Activated CD4-positive, alpha-beta T cell treated with anti-CD3 and anti-CD28 coated beads for 36 hours (primary cell): ENCODE measurements at regions of chr19 and their contacts with region 1.

Region 1: GRCh38 chr19:19192078-19192882 is at the starts of genes BORCS8 and RFXANK:
- DNase-seq: peak; percentile 99
- ATAC-seq: peak; percentile 92
- H3K4me3 Mint-ChIP-seq: peak within 1 kb of the TSS; percentile 91
- H3K27ac Mint-ChIP-seq: peak within 1 kb of the TSS; percentile 94
- H3K4me1 Mint-ChIP-seq: peaks cover 41% of the 10 kb centered on the region
- H3K27me3 Mint-ChIP-seq: no peaks in the 10 kb centered on the region
- total RNA-seq, gene BORCS8: 19.5 to 25.3 TPM
- total RNA-seq, gene RFXANK: 56.2 to 68.5 TPM

Region 2: DNA sequence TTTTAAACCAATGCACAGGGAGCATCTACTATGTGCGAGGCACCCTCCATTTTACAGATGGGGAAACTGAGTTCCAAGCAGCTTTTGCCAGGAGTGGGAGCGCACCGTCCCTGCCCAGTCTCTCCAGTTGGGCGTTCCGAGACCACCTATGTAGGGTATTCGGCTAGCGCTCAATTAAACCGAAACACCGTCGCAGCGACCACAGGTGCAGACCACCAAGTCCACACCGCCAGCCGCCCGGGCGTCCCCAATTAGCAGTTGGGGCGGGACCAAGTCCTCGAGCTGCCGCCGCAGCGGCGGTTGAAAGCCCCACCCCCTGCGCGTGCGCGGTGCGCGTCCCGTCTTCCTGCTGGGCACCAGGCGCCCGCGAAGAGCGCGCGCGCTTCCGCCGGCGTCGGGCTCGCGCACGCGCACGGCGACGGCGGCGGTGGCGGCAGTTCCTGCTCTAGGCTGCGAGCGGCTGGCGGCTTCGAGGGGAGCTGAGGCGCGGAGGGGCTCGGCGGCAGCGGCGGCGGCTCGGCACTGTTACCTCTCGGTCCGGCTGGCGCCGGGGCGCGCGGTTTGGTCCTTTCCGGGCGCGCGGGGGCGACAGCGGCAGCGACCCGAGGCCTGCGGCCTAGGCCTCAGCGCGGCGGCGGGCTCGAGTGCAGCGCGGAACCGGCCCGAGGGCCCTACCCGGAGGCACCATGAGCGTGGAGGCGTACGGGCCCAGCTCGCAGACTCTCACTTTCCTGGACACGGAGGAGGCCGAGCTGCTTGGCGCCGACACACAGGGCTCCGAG is 360.6 kb before region 1 on chr19 and contains the start of gene UPF1:
- CTCF ChIA-PET with region 1: no interaction called
- POLR2A ChIA-PET with region 1: no interaction called
- intact Hi-C with region 1: loop called in 1 of 2 experiments (anchors 1 kb)
- DNase-seq: peak; percentile 98
- ATAC-seq: peak; percentile 82
- H3K4me3 Mint-ChIP-seq: peak within 1 kb of the TSS; percentile 96
- H3K27ac Mint-ChIP-seq: peak within 1 kb of the TSS; percentile 90
- H3K4me1 Mint-ChIP-seq: peaks cover 34% of the 10 kb centered on the region
- H3K27me3 Mint-ChIP-seq: peaks cover 3% of the 10 kb centered on the region
- total RNA-seq, gene UPF1: 72.4 to 74.0 TPM

Region 3: GRCh38 chr19:19138169-19138981 is 53.9 kb before region 1 on chr19 and contains the start of gene TMEM161A:
- CTCF ChIA-PET with region 1: interaction called, 4 read pairs
- POLR2A ChIA-PET with region 1: no interaction called
- intact Hi-C with region 1: loop called in 1 of 2 experiments (anchors 1 kb)
- DNase-seq: peak; percentile 98
- ATAC-seq: peak; percentile 100
- H3K4me3 Mint-ChIP-seq: peak within 1 kb of the TSS; percentile 93
- H3K27ac Mint-ChIP-seq: peak within 1 kb of the TSS; percentile 95
- H3K4me1 Mint-ChIP-seq: peaks cover 30% of the 10 kb centered on the region
- H3K27me3 Mint-ChIP-seq: no peaks in the 10 kb centered on the region
- total RNA-seq, gene TMEM161A: 26.8 to 31.9 TPM

Region 4: GRCh38 chr19:19320362-19321142 is 128.3 kb after region 1 on chr19 and contains the starts of genes MAU2 and SUGP1:
- CTCF ChIA-PET with region 1: interaction called, 3 read pairs
- POLR2A ChIA-PET with region 1: no interaction called
- intact Hi-C with region 1: loop called (anchors 1 kb)
- DNase-seq: peak; percentile 96
- ATAC-seq: peak; percentile 93
- H3K4me3 Mint-ChIP-seq: peak within 1 kb of the TSS; percentile 93
- H3K27ac Mint-ChIP-seq: peak within 1 kb of the TSS; percentile 100
- H3K4me1 Mint-ChIP-seq: peaks cover 39% of the 10 kb centered on the region
- H3K27me3 Mint-ChIP-seq: no peaks in the 10 kb centered on the region
- total RNA-seq, gene MAU2: 33.3 to 45.7 TPM
- total RNA-seq, gene SUGP1: 49.4 to 62.0 TPM

Region 5: GRCh38 chr19:19488875-19489690 is 296.8 kb after region 1 on chr19:
- CTCF ChIA-PET with region 1: interaction called, 5 read pairs
- POLR2A ChIA-PET with region 1: no interaction called
- intact Hi-C with region 1: loop called in 1 of 2 experiments (anchors 1 kb)
- DNase-seq: peak; percentile 95
- ATAC-seq: peak; percentile 93
- H3K4me3 Mint-ChIP-seq: peak overlapping the region; percentile 43
- H3K27ac Mint-ChIP-seq: peak overlapping the region; percentile 97
- H3K4me1 Mint-ChIP-seq: peaks cover 57% of the 10 kb centered on the region
- H3K27me3 Mint-ChIP-seq: no peaks in the 10 kb centered on the region